Activated CD4-positive, alpha-beta T cell treated with anti-CD3 and anti-CD28 coated beads for 36 hours (primary cell): ENCODE measurements at regions of chr6 and their contacts with region 1.

Region 1: GRCh38 chr6:159104163-159104925 is 59.6 kb upstream of the TAGAP start:
- DNase-seq: peak; percentile 89
- ATAC-seq: peak; percentile 72
- H3K4me3 Mint-ChIP-seq: peak overlapping the region; percentile 10
- H3K27ac Mint-ChIP-seq: peak overlapping the region; percentile 87
- H3K4me1 Mint-ChIP-seq: peaks cover 79% of the 10 kb centered on the region
- H3K27me3 Mint-ChIP-seq: no peaks in the 10 kb centered on the region

Region 2: GRCh38 chr6:158704181-158704822 is 400.0 kb before region 1 on chr6:
- CTCF ChIA-PET with region 1: interaction called, 3 read pairs
- POLR2A ChIA-PET with region 1: no interaction called
- intact Hi-C with region 1: loop called in 1 of 2 experiments (anchors 1 kb)
- DNase-seq: peak; percentile 87
- ATAC-seq: peak; percentile 93
- H3K4me3 Mint-ChIP-seq: peak overlapping the region; percentile 45
- H3K27ac Mint-ChIP-seq: no peak overlapping the region
- H3K4me1 Mint-ChIP-seq: peaks cover 13% of the 10 kb centered on the region
- H3K27me3 Mint-ChIP-seq: no peaks in the 10 kb centered on the region

Region 3: DNA sequence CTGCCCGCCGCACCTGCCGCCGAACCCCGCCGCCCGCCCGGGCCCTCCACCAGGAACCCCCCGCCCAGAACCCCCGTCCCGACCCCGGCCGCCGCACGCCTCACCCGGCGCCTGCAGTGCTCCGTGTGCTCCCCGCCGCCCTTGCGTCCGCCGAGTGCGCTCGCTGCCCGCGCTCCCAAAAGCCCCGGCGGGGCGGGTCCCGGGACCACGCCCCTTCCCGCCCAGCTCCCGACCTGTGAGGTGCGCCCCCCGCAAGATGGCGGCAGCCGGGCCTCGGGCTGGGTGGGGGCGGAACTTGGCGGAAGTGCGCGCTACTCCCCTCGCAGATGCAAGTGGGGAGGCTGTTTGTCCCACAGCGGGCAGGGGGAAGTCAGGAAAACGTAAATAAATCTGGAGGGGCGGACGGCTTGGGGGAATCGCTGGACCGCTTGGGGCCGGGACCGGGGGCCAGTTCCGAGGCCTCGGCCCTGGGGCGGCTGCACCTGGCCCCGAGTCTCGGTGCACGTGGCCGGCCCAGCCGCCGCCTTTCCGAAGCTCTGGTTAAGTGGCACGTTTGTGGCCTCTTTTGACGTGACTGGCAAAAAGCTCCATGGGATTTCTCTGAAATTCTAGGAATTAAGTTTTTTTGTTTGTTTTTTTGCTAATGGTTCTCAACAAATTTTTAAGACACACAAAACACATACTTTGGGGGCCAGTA is 285.0 kb before region 1 on chr6 and contains the start of gene EZR:
- CTCF ChIA-PET with region 1: no interaction called
- POLR2A ChIA-PET with region 1: no interaction called
- intact Hi-C with region 1: loop called in 1 of 2 experiments (anchors 2 kb)
- DNase-seq: peak; percentile 91
- ATAC-seq: peak; percentile 52
- H3K4me3 Mint-ChIP-seq: peak within 1 kb of the TSS; percentile 93
- H3K27ac Mint-ChIP-seq: peak within 1 kb of the TSS; percentile 87
- H3K4me1 Mint-ChIP-seq: peaks cover 38% of the 10 kb centered on the region
- H3K27me3 Mint-ChIP-seq: no peaks in the 10 kb centered on the region
- total RNA-seq, gene EZR: 197 to 203 TPM

Region 4: DNA sequence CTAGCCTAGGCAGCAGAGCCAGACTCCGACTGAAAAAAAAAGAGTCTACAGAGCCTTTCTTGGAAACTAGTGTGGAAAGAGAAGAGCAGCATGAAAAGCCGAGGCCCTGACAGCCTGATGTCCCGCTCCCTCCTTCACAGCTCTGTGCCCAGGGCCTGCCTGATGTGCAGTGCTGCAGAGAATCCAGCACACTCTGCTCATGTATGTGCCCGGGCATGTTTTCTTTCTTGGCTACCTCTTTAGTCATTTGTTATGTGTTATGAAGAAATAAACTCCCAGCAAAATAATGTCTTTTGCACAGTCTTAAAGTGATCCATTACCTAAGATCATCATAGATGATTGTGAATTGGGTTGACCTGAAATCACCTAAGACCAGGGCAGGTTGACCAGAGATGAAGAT is 207.1 kb before region 1 on chr6:
- CTCF ChIA-PET with region 1: no interaction called
- POLR2A ChIA-PET with region 1: no interaction called
- intact Hi-C with region 1: no loop called
- DNase-seq: no peak
- ATAC-seq: no peak
- H3K4me3 Mint-ChIP-seq: no peak overlapping the region
- H3K27ac Mint-ChIP-seq: no peak overlapping the region
- H3K4me1 Mint-ChIP-seq: no peaks in the 10 kb centered on the region
- H3K27me3 Mint-ChIP-seq: no peaks in the 10 kb centered on the region

Region 5: GRCh38 chr6:158972241-158973233 is 131.8 kb before region 1 on chr6:
- CTCF ChIA-PET with region 1: interaction called, 17 read pairs
- POLR2A ChIA-PET with region 1: no interaction called
- intact Hi-C with region 1: no loop called
- DNase-seq: no peak
- ATAC-seq: peak; percentile 51
- H3K4me3 Mint-ChIP-seq: no peak overlapping the region
- H3K27ac Mint-ChIP-seq: no peak overlapping the region
- H3K4me1 Mint-ChIP-seq: no peaks in the 10 kb centered on the region
- H3K27me3 Mint-ChIP-seq: no peaks in the 10 kb centered on the region

Region 6: GRCh38 chr6:158999666-159000403 is 104.5 kb before region 1 on chr6 and contains the start of gene RSPH3:
- CTCF ChIA-PET with region 1: interaction called, 413 read pairs
- POLR2A ChIA-PET with region 1: interaction called, 6 read pairs
- intact Hi-C with region 1: loop called in 1 of 2 experiments (anchors 1 kb)
- DNase-seq: peak; percentile 97
- ATAC-seq: peak; percentile 86
- H3K4me3 Mint-ChIP-seq: peak within 1 kb of the TSS; percentile 82
- H3K27ac Mint-ChIP-seq: peak within 1 kb of the TSS; percentile 66
- H3K4me1 Mint-ChIP-seq: peaks cover 46% of the 10 kb centered on the region
- H3K27me3 Mint-ChIP-seq: no peaks in the 10 kb centered on the region
- total RNA-seq, gene RSPH3: 6.5 to 9.3 TPM

Region 7: DNA sequence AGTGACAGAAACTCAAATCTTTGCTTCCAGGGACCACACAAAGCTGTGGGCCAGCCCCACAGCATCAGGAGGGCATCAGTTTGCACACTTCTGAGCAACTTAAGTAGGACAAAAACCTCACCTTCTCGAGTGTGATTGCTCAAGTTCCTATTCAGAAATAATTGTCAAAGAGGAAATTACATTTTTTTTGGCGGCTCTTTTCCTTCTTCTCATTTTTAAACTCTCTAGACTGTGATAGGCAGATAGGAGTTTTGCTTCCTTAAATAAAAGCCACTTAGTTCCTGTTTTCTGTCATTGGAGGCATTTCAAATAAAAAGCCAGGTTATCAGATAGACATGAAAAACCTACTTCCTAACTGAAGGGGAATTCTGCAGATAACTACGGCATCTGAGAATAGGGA is 48.3 kb before region 1 on chr6:
- CTCF ChIA-PET with region 1: interaction called, 12 read pairs
- POLR2A ChIA-PET with region 1: interaction called, 3 read pairs
- intact Hi-C with region 1: no loop called
- DNase-seq: no peak
- ATAC-seq: no peak
- H3K4me3 Mint-ChIP-seq: peak overlapping the region; percentile 13
- H3K27ac Mint-ChIP-seq: peak overlapping the region; percentile 89
- H3K4me1 Mint-ChIP-seq: peaks cover 67% of the 10 kb centered on the region
- H3K27me3 Mint-ChIP-seq: no peaks in the 10 kb centered on the region

Region 8: DNA sequence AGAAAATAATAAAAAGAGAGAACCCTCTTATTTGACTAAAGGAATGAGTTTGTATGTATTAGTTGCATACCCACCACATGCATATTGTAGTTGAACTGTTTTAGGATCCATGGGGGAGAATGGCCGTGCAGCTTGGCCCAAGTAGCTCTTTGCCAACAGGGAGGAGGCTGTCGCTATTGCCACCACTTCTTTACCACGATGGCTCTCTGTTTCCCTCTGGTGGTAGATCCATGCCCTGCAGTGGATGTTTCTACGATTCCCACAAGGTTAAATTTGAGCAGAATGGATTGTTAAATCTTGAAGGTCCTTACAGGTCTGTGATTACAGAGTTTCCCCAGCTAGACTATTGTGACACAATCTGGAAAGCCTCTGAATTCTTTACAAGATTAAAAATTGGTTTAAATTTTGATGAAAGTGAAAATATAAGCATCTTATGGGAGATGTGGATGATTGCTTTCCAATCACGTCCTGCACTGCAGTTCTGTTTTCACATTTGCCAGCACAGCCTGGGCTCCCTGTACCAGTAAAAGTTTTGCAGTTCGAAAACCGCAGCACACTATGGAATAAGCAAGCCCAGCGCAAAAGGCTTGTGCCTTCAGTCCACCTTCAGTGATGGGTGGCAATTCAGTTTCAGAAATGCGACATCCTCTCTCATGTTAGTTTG is 30.5 kb after region 1 on chr6:
- CTCF ChIA-PET with region 1: interaction called, 76 read pairs
- POLR2A ChIA-PET with region 1: no interaction called
- intact Hi-C with region 1: loop called (anchors 2 kb)
- DNase-seq: peak; percentile 85
- ATAC-seq: peak; percentile 94
- H3K4me3 Mint-ChIP-seq: no peak overlapping the region
- H3K27ac Mint-ChIP-seq: no peak overlapping the region
- H3K4me1 Mint-ChIP-seq: no peaks in the 10 kb centered on the region
- H3K27me3 Mint-ChIP-seq: peaks cover 5% of the 10 kb centered on the region